ENCODE measurements at regions of chr15 and their contacts with region 1.

Region 1: DNA sequence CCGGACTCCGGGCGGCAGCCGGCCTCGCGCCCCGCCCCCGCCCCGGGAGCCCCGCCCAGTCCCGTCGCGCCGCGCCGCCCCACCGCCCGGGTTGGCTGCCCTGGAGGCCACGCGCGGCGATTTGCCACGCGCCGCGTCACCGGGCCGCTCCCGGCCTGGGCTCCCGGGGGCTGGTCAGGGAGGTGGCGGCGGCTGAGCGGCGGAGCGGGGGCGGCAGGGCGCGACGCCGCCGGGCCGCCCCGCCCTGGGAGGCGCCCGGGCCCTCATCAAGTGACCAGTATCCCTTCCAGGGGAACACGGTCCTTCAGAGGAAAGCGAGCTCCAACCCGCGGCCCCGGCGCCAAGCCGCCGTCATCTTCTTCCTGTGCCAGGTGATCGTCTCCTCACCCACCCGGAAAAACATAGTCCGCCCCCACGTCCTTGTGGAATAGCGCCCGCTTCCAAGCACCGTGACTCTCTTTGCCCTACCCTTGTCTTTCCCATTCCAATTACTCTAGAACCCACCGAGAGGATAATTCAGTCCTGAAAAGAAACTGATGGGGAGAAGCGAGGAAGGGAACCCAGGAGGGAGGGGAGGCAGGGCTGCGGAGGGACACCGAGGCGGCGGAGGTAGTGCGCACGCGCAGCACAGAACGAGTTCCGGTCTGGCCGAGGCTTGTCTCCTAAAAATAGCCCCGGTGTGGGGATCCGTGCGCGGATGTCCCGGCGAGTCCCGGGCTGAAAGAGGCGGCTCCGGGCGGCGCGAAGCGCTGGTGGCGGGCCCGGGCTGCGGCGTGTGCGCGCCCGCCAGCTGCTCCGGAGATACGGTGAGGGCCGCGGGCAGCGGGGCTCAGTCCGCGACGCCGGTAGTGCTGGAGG is at the start of gene MEF2A:
- DNase-seq: peak; percentile 98
- total RNA-seq, gene MEF2A: 195 TPM

Region 2: GRCh38 chr15:99409097-99409473 is 156.4 kb before region 1 on chr15:
- intact Hi-C with region 1: loop called (anchors 10 kb)
- DNase-seq: no peak

Region 3: GRCh38 chr15:99452774-99453636 is 112.5 kb before region 1 on chr15:
- intact Hi-C with region 1: loop called (anchors 1 kb)
- DNase-seq: peak; percentile 93

Region 4: GRCh38 chr15:99682455-99682854 is 116.9 kb after region 1 on chr15:
- intact Hi-C with region 1: loop called (anchors 5 kb)
- DNase-seq: no peak

Region 5: DNA sequence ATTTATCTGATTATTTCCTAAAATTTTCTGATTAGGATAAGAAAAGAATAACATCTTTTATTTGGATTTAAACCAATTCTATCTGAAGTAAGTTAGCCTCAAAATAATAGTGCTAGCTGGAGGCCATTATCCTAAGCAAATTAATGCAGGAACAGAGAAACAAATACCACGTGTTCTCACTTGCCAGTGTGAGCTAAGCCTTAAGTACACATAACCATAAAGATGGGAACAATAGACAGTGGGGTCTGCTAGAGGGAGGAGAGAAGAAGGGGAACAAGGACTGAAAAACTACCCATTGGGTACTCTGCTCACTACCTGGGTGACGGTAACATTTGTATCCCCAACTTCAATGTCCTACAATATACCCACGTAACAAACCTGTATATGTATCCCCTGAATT is 199.0 kb after region 1 on chr15:
- intact Hi-C with region 1: no loop called
- DNase-seq: no peak

Measured in cardiac septum (tissue), 1 donor.